ENCODE measurements at regions of chr6 and their contacts with region 1.

Region 1: DNA sequence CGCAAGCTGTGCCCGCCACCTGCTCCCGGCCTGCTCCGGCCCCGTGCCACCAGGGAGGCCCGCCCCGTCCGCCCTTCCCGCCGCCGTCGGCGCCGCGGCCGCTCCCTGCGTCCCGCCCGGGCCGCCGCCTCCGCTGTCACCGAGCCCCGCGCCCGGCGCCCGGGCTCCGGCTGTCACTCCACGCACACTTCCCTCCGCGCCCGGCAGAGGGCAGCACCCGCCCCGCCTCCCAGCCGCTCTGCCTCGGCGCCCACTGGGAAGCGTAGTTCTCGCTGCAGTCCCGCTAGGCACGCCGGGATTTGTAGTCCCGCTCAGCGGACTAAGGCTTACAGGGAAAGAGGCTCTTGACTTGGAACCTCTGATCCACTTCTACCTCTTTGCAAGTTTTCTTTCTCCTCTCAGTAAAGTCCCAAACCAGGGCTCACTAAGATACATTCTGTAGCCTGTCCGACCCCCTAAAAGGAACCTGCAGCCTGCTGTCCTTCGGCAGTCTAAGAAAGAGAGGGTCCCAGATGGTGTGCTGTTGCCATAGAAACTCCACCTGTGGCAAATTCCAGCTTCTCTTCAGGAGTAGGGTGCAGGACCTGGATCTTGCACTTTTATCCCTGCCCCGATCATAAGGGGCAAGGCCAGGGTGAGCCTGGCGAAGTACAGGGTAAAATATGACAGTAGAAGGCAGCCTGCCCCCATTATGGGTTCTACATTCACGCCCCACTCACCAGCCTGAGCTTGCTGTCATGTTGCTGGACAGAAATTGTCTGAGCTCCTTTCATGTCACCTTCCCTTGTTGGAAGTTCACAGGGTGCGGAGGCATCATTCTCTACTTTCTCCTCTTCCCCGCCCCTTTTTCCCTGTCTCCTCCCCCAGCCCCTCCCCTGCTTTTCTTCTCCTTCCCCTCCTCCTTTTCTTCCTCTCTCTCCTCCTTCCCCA is at the start of gene TFEB:
- DNase-seq: peak; percentile 95
- H3K4me3 Mint-ChIP-seq: peak within 1 kb of the TSS; percentile 67
- H3K27ac Mint-ChIP-seq: peak within 1 kb of the TSS; percentile 18
- H3K4me1 Mint-ChIP-seq: peaks cover 27% of the 10 kb centered on the region
- H3K27me3 Mint-ChIP-seq: no peaks in the 10 kb centered on the region
- total RNA-seq, gene TFEB: 11.7 to 13.4 TPM

Region 2: GRCh38 chr6:41072676-41073623 is 662.7 kb before region 1 on chr6 and contains the start of gene NFYA:
- CTCF ChIA-PET with region 1: no interaction called
- POLR2A ChIA-PET with region 1: no interaction called
- intact Hi-C with region 1: loop called (anchors 2 kb)
- DNase-seq: peak; percentile 100
- H3K4me3 Mint-ChIP-seq: peak within 1 kb of the TSS; percentile 93
- H3K27ac Mint-ChIP-seq: peak within 1 kb of the TSS; percentile 98
- H3K4me1 Mint-ChIP-seq: peaks cover 52% of the 10 kb centered on the region
- H3K27me3 Mint-ChIP-seq: no peaks in the 10 kb centered on the region
- total RNA-seq, gene NFYA: 30.2 to 30.4 TPM

Region 3: DNA sequence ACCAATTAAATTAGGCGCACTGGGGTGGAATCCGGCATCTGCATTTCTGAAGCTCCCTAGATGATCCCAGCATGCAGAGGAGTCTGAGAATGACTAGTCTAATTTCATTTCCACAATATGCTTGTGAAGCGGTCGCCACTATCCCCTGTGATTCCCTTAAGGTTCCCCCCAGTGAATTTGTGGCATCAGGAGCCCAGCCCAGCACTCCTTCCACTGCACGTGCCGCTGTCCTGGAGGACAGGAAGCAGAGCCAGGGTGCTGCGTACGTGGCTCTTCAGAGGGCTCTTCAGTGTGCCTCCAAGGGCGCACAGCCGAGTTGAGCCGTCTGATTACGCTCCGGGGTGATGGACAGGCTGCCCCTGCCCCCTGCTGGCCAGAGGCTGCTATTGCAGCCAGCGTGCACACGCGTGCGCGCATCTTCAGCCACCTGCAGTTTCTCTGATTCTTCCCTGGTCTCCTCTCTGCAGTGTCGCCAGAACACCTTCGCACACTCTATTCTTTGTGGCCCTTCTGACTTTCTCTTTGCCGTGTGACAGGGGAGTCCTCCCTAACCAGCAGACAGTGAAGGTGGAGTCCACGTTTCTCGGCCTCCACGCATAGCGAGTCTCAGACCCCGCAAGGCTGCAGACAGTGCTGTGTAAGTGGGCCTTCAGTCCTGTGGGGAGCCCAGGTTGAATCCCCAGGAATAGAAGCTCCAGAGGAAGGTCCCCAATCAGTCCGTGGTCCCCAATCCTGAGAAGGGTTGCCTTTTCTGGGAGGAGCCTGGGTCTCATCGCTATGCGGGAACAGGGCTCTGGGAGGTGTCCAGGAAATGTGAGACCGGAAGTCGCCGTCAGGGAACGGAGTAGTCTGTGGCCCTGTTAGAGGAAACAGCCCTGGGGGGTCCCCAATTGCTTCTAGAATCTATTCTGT is 416.8 kb before region 1 on chr6:
- CTCF ChIA-PET with region 1: no interaction called
- POLR2A ChIA-PET with region 1: no interaction called
- intact Hi-C with region 1: no loop called
- DNase-seq: peak; percentile 88
- H3K4me3 Mint-ChIP-seq: peak overlapping the region; percentile 47
- H3K27ac Mint-ChIP-seq: no peak overlapping the region
- H3K4me1 Mint-ChIP-seq: peaks cover 7% of the 10 kb centered on the region
- H3K27me3 Mint-ChIP-seq: peaks cover 17% of the 10 kb centered on the region

Region 4: DNA sequence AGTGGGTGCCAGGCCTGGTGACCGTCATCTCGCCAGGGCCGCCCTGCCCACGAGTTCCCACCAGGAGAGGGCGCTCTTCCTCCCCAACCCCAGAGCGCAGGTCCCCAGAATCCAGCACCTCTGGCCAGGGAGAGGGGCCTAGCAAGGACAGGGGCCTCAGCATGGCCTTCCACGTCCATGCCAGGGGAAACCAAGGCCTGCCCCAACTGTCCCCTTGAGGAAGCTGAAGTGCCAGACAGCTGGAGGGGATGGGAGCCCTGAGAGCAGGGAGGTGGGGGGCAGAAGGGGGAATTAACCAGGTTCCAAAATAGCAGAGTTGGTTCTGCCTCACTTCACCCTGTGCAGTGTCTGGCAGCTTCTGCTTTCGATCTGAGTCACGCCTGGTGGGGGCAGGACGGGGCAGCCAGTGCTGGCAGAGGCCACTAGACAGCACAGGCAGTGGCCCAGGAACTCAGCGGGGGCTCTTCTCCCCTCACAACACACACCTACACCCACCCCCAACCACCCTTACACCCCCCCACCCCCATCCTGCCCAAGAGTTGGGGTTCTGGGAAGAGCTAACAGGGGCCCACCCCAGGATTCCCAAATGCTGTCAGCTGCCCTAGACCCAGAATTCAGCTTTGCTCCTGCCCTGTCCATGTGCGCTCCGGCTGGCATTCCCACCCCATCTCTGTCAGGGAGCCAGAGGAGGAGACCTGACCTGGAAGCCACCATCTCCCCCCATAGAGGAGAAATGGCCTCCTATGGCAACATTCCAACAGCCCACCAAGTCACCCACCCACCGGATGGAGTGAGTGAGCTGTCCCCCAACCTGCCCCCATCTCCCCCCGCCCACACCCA is 29.5 kb before region 1 on chr6:
- CTCF ChIA-PET with region 1: interaction called, 49 read pairs
- POLR2A ChIA-PET with region 1: interaction called, 6 read pairs
- intact Hi-C with region 1: loop called (anchors 1 kb)
- DNase-seq: peak; percentile 90
- H3K4me3 Mint-ChIP-seq: peak overlapping the region; percentile 38
- H3K27ac Mint-ChIP-seq: peak overlapping the region; percentile 89
- H3K4me1 Mint-ChIP-seq: peaks cover 36% of the 10 kb centered on the region
- H3K27me3 Mint-ChIP-seq: no peaks in the 10 kb centered on the region

Region 5: GRCh38 chr6:41716516-41717391 is 18.9 kb before region 1 on chr6:
- CTCF ChIA-PET with region 1: interaction called, 4 read pairs
- POLR2A ChIA-PET with region 1: interaction called, 10 read pairs
- intact Hi-C with region 1: no loop called
- DNase-seq: no peak
- H3K4me3 Mint-ChIP-seq: no peak overlapping the region
- H3K27ac Mint-ChIP-seq: no peak overlapping the region
- H3K4me1 Mint-ChIP-seq: peaks cover 23% of the 10 kb centered on the region
- H3K27me3 Mint-ChIP-seq: no peaks in the 10 kb centered on the region

Region 6: GRCh38 chr6:41779793-41780545 is 44.3 kb after region 1 on chr6 and contains the start of gene FRS3:
- CTCF ChIA-PET with region 1: interaction called, 3 read pairs
- POLR2A ChIA-PET with region 1: no interaction called
- intact Hi-C with region 1: loop called (anchors 5 kb)
- DNase-seq: peak; percentile 99
- H3K4me3 Mint-ChIP-seq: peak within 1 kb of the TSS; percentile 85
- H3K27ac Mint-ChIP-seq: peak within 1 kb of the TSS; percentile 38
- H3K4me1 Mint-ChIP-seq: peaks cover 13% of the 10 kb centered on the region
- H3K27me3 Mint-ChIP-seq: peaks cover 6% of the 10 kb centered on the region
- total RNA-seq, gene FRS3: 4.8 to 5.5 TPM

Region 7: GRCh38 chr6:41787219-41787917 is 51.7 kb after region 1 on chr6 and contains the start of gene TOMM6:
- CTCF ChIA-PET with region 1: interaction called, 36 read pairs
- POLR2A ChIA-PET with region 1: no interaction called
- intact Hi-C with region 1: loop called (anchors 1 kb)
- DNase-seq: peak; percentile 98
- H3K4me3 Mint-ChIP-seq: peak within 1 kb of the TSS; percentile 92
- H3K27ac Mint-ChIP-seq: peak within 1 kb of the TSS; percentile 90
- H3K4me1 Mint-ChIP-seq: peaks cover 20% of the 10 kb centered on the region
- H3K27me3 Mint-ChIP-seq: no peaks in the 10 kb centered on the region
- total RNA-seq, gene TOMM6: 264 to 280 TPM

Region 8: DNA sequence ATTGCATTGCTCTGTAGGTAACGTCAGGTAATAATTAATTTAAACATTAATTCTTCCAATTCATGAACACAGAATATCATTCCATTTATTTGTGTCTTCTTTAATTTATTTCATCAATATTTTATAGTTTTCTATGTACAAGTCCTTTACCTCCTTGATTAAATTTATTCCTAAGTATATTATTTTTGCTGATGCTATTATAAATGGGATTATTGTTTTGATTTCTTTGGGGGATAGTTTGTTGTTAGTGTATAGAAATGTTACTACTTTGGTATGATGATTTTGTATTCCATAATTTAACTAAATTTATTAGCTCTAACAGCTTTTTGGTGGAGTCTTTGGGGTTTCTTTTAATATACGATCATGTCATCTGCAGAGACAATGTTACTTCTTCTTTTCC is 250.6 kb after region 1 on chr6:
- CTCF ChIA-PET with region 1: no interaction called
- POLR2A ChIA-PET with region 1: no interaction called
- intact Hi-C with region 1: no loop called
- DNase-seq: no peak
- H3K4me3 Mint-ChIP-seq: no peak overlapping the region
- H3K27ac Mint-ChIP-seq: no peak overlapping the region
- H3K4me1 Mint-ChIP-seq: peaks cover 65% of the 10 kb centered on the region
- H3K27me3 Mint-ChIP-seq: no peaks in the 10 kb centered on the region

Measured in activated CD4-positive, alpha-beta memory T cell treated with anti-CD3 and anti-CD28 coated beads for 36 hours (primary cell).